ENCODE measurements at regions of chr3 and their contacts with region 1.

Region 1: GRCh38 chr3:197424674-197425484 is 126.5 kb upstream of the DLG1 start:
- DNase-seq: no peak
- H3K4me3 Mint-ChIP-seq: no peak overlapping the region
- H3K27ac Mint-ChIP-seq: peak overlapping the region; percentile 3
- H3K4me1 Mint-ChIP-seq: peaks cover 22% of the 10 kb centered on the region
- H3K27me3 Mint-ChIP-seq: peaks cover 12% of the 10 kb centered on the region

Region 2: GRCh38 chr3:197443506-197443905 is 18.6 kb after region 1 on chr3:
- CTCF ChIA-PET with region 1: interaction called, 11 read pairs
- POLR2A ChIA-PET with region 1: no interaction called
- DNase-seq: no peak
- H3K4me3 Mint-ChIP-seq: no peak overlapping the region
- H3K27ac Mint-ChIP-seq: no peak overlapping the region
- H3K4me1 Mint-ChIP-seq: peaks cover 5% of the 10 kb centered on the region
- H3K27me3 Mint-ChIP-seq: peaks cover 8% of the 10 kb centered on the region